GM12878 (cell line): ENCODE measurements at regions of chr3 and their contacts with region 1.

Region 1: DNA sequence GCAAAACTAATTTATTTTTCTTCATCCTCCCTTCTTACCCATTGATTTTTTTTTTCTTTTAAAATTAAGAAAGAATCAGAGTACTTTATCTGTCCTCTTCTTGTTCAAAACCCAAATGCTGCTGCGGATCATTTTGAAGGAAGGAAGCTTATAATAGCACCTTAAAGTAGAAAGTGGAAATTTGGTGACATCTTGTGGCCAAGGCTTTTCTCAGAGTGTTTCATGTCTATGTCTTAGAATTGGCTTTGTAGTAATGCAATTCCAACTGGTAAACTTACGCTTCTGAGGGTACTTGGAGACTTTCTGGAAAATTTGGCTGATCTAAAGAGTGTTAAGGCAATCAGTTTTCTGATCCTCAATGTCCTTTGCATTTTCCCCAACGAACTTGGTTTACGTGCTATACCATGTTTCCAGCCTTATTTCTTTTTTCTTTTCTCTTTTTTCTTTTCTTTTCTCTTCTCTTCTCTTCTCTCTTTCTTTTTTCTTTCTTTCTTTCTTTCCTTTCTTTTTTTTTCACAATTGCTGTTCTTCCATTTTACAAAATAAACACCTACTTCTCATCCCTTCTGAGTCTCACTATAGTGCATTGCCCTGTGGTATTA is 30.7 kb downstream of the C3orf38 start:
- DNase-seq: peak; percentile 27
- ATAC-seq: peak; percentile 89
- H3K4me3 ChIP-seq: no peak overlapping the region
- H3K27ac ChIP-seq: no peak overlapping the region
- H3K4me1 ChIP-seq: no peaks in the 10 kb centered on the region
- H3K27me3 ChIP-seq: no peaks in the 10 kb centered on the region; a peak in 1 of 4 replicates
- CTCF ChIP-seq: peak; percentile 58 to 69 (median 64)
- EP300 ChIP-seq: no peak
- POLR2A ChIP-seq: no peak
- RAD21 ChIP-seq: peak; percentile 84

Region 2: DNA sequence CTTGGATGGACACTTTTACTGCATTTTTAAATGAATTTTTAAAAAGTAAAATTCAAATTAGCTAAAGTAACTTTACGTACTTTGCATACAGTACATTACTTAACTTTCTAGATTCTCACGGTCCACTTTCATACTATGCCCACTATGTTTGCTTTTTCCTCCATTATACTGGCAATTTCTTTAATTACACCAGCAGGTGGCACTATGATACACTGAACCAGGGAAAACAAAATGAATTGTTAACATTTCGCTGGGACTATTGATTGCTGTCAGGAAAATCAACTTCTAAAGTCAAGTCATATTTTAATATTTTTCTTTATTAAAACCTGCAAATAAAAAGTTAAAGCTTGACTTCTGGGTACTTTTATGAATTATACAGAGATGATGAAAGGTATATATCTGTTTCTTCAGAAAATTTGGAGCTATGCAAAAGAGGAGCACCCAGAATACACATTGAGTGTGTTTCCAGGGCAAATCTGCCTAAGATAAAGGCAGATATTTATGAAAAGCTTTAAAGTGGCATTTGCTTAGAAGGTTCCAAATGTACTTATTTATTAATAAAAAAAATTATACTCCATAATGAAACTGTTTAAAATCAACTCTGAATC is 882.3 kb before region 1 on chr3:
- CTCF ChIA-PET with region 1: interaction called, 6 read pairs
- POLR2A ChIA-PET with region 1: no interaction called
- RAD21 ChIA-PET with region 1: interaction called, 3 read pairs
- SMC1A ChIA-PET with region 1: interaction called, 4 read pairs
- in situ Hi-C with region 1: no loop called
- intact Hi-C with region 1: loop called (anchors 2 kb)
- DNase-seq: no peak
- ATAC-seq: peak; percentile 88
- H3K4me3 ChIP-seq: no peak overlapping the region
- H3K27ac ChIP-seq: no peak overlapping the region
- H3K4me1 ChIP-seq: no peaks in the 10 kb centered on the region
- H3K27me3 ChIP-seq: no peaks in the 10 kb centered on the region
- CTCF ChIP-seq: peak; percentile 52 to 59 (median 58); a peak in 5 of 6 replicates
- EP300 ChIP-seq: no peak
- POLR2A ChIP-seq: no peak
- RAD21 ChIP-seq: peak; percentile 67

Region 3: GRCh38 chr3:87350364-87351199 is 829.9 kb before region 1 on chr3:
- CTCF ChIA-PET with region 1: interaction called, 8 read pairs
- POLR2A ChIA-PET with region 1: no interaction called
- RAD21 ChIA-PET with region 1: no interaction called
- SMC1A ChIA-PET with region 1: no interaction called
- in situ Hi-C with region 1: no loop called
- intact Hi-C with region 1: loop called (anchors 5 kb)
- DNase-seq: no peak
- ATAC-seq: peak; percentile 96
- H3K4me3 ChIP-seq: no peak overlapping the region
- H3K27ac ChIP-seq: no peak overlapping the region
- H3K4me1 ChIP-seq: no peaks in the 10 kb centered on the region
- H3K27me3 ChIP-seq: no peaks in the 10 kb centered on the region
- CTCF ChIP-seq: peak; percentile 71 to 87 (median 81)
- EP300 ChIP-seq: no peak
- POLR2A ChIP-seq: no peak
- RAD21 ChIP-seq: peak; percentile 76

Region 4: DNA sequence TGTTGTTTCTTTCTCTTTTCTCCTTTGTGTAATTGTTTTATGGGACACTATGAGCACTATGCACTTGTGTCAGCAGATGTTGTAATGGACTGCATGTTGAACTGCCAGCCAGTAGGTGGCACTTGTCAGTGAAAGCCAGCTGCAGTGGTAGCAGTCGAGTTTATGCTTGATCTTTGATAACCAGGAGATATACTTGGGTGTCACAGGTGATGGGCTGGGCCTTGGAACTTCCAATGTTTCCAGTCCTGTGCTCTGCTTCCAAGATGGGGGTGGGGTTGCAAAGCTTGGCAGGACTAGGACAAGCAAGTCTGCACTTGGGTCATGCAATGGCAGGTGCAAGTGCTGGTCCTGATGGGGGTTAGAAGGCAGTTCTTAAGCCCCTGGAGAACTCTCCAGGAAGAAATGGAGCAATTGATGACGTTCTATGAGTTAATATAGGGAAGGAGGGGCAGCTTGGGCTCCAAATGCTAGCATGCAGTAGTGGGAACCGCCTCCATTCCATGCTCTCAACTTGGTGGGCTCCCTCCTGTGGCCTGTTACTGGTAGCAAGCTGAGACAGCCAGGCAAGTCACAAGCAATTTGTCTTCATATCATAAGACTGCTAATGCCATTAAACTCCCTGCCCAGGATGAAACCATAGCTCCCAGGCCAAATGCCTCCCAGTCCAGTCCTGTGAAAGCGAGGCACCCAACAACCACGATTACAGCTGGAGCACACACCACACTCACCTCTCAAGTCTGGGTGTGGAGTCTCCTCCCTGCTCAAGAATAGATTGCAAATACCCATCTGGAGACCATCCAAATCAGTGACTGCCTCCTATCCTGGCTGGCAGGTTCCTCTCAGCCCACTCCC is 408.9 kb before region 1 on chr3:
- CTCF ChIA-PET with region 1: interaction called, 3 read pairs
- POLR2A ChIA-PET with region 1: no interaction called
- RAD21 ChIA-PET with region 1: interaction called, 3 read pairs
- SMC1A ChIA-PET with region 1: no interaction called
- in situ Hi-C with region 1: loop called (anchors 10 kb)
- intact Hi-C with region 1: loop called (anchors 2 kb)
- DNase-seq: peak; percentile 8
- ATAC-seq: peak; percentile 96
- H3K4me3 ChIP-seq: no peak overlapping the region
- H3K27ac ChIP-seq: no peak overlapping the region
- H3K4me1 ChIP-seq: no peaks in the 10 kb centered on the region
- H3K27me3 ChIP-seq: no peaks in the 10 kb centered on the region
- CTCF ChIP-seq: peak; percentile 73 to 87 (median 82)
- EP300 ChIP-seq: no peak
- POLR2A ChIP-seq: no peak
- RAD21 ChIP-seq: peak; percentile 61

Region 5: DNA sequence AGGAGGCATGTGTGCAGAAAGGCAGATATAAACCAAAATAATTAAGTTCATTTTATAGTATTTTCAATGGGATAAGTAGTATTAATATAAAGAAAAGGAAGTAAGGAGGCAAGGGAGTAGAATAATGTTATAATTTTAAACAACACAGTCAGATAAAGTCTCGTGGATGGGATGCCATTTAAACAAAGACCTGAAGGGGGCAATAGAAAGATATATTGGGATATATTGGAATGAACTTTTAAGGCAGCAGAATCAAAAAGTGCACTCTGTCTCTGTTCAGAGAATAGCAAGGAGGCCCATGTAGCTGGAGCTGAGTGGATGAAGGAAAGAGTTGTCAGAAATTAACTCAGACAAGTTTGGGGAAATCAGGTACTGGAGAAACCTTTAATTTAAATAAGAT is 280.4 kb before region 1 on chr3:
- CTCF ChIA-PET with region 1: no interaction called
- POLR2A ChIA-PET with region 1: no interaction called
- RAD21 ChIA-PET with region 1: no interaction called
- SMC1A ChIA-PET with region 1: no interaction called
- in situ Hi-C with region 1: no loop called
- intact Hi-C with region 1: loop called (anchors 5 kb)
- DNase-seq: no peak
- ATAC-seq: peak; percentile 49
- H3K4me3 ChIP-seq: no peak overlapping the region
- H3K27ac ChIP-seq: no peak overlapping the region
- H3K4me1 ChIP-seq: no peaks in the 10 kb centered on the region
- H3K27me3 ChIP-seq: no peaks in the 10 kb centered on the region
- CTCF ChIP-seq: peak; percentile 6 to 30 (median 15); a peak in 1 of 6 replicates
- EP300 ChIP-seq: no peak
- POLR2A ChIP-seq: no peak
- RAD21 ChIP-seq: peak; percentile 41; the same call in 1 of the 2 replicates

Region 6: GRCh38 chr3:88167704-88168103 is 12.8 kb before region 1 on chr3:
- CTCF ChIA-PET with region 1: interaction called, 12 read pairs
- POLR2A ChIA-PET with region 1: no interaction called
- RAD21 ChIA-PET with region 1: interaction called, 3 read pairs
- SMC1A ChIA-PET with region 1: interaction called, 4 read pairs
- in situ Hi-C with region 1: no loop called
- intact Hi-C with region 1: no loop called
- DNase-seq: no peak
- ATAC-seq: no peak
- H3K4me3 ChIP-seq: no peak overlapping the region
- H3K27ac ChIP-seq: no peak overlapping the region
- H3K4me1 ChIP-seq: no peaks in the 10 kb centered on the region; the same call in 1 of the 2 replicates
- H3K27me3 ChIP-seq: no peaks in the 10 kb centered on the region
- CTCF ChIP-seq: no peak
- EP300 ChIP-seq: no peak
- POLR2A ChIP-seq: no peak
- RAD21 ChIP-seq: no peak

Region 7: GRCh38 chr3:88267441-88267840 is 86.9 kb after region 1 on chr3:
- CTCF ChIA-PET with region 1: no interaction called
- POLR2A ChIA-PET with region 1: no interaction called
- RAD21 ChIA-PET with region 1: no interaction called
- SMC1A ChIA-PET with region 1: no interaction called
- in situ Hi-C with region 1: no loop called
- intact Hi-C with region 1: no loop called
- DNase-seq: no peak
- ATAC-seq: no peak
- H3K4me3 ChIP-seq: no peak overlapping the region
- H3K27ac ChIP-seq: no peak overlapping the region
- H3K4me1 ChIP-seq: no peaks in the 10 kb centered on the region
- H3K27me3 ChIP-seq: no peaks in the 10 kb centered on the region
- CTCF ChIP-seq: no peak
- EP300 ChIP-seq: no peak
- POLR2A ChIP-seq: no peak
- RAD21 ChIP-seq: no peak